ENCODE measurements at regions of chr3 and their contacts with region 1.

Region 1: GRCh38 chr3:29026959-29027358 is 253.9 kb upstream of the RBMS3 start:
- DNase-seq: peak; percentile 86
- H3K4me3 ChIP-seq: no peak overlapping the region
- H3K27ac ChIP-seq: peak overlapping the region; percentile 36
- H3K4me1 ChIP-seq: peaks cover 10% of the 10 kb centered on the region
- H3K27me3 ChIP-seq: no peaks in the 10 kb centered on the region
- CTCF ChIP-seq: no peak

Region 2: GRCh38 chr3:29065211-29065785 is 38.3 kb after region 1 on chr3:
- CTCF ChIA-PET with region 1: no interaction called
- dilution Hi-C with region 1: no loop called
- in situ Hi-C with region 1: no loop called
- intact Hi-C with region 1: loop called (anchors 1 kb)
- DNase-seq: peak; percentile 99
- H3K4me3 ChIP-seq: no peak overlapping the region
- H3K27ac ChIP-seq: peak overlapping the region; percentile 78
- H3K4me1 ChIP-seq: peaks cover 11% of the 10 kb centered on the region
- H3K27me3 ChIP-seq: no peaks in the 10 kb centered on the region
- CTCF ChIP-seq: no peak